ENCODE measurements at regions of chr16 and their contacts with region 1.

Region 1: GRCh38 chr16:56964243-56965148 is 2.7 kb downstream of the CETP start:
- DNase-seq: peak; percentile 53
- H3K4me3 ChIP-seq: no peak overlapping the region
- H3K27me3 ChIP-seq: no peaks in the 10 kb centered on the region
- CTCF ChIP-seq: peak; percentile 65

Region 2: GRCh38 chr16:56950881-56951771 is 13.4 kb before region 1 on chr16:
- CTCF ChIA-PET with region 1: interaction called, 13 read pairs
- POLR2A ChIA-PET with region 1: interaction called, 3 read pairs
- DNase-seq: no peak
- H3K4me3 ChIP-seq: no peak overlapping the region
- H3K27me3 ChIP-seq: no peaks in the 10 kb centered on the region
- CTCF ChIP-seq: peak; percentile 86

Measured in BJ (cell line).